Prostate gland (tissue), 2 donors: ENCODE measurements at regions of chr2 and their contacts with region 1.

Region 1: DNA sequence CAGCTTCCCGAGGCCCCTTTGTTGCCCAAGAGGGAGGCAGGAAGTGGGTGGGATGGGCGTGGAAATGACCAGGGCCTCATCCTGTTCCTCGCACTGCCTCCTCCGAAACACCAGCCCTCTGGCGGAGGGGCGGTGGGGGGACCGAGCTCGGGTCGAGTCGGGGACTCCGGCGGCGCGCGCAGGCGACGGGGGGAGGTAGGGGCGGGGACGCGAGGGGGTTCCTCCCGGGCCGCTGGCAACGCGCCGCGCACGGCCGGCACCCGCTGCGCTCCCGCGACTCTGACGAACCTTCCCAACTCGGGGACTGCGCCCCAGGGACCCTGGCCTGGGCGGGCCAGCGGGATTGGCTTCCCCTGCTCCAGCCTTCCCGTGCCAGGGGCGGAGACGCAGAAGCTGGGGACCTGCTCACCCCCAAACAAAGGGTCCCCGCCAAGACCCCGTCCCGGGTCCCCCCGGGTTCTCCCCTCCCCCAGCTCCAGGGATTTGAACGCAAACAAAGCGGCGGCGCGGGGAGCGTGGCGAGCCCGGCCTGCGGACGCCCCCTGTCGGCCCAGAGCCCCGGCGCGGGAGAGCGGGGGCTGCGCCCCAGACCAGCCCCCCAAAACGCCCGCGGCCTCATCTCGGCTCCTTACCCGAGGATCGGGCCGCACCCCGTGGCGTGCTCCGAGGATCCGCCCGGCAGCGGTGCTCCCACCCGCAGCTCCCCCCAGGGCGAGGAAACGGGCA is 1.2 kb downstream of the SEMA4C start:
- DNase-seq: peak; percentile 86
- H3K4me3 ChIP-seq: peak overlapping the region; percentile 99 to 100
- H3K27ac ChIP-seq: peak overlapping the region; percentile 98 to 99
- H3K4me1 ChIP-seq: peaks cover 11% of the 10 kb centered on the region
- H3K27me3 ChIP-seq: no peaks in the 10 kb centered on the region
- CTCF ChIP-seq: peak; percentile 47 to 77 (median 64)
- POLR2A ChIP-seq: no peak

Region 2: GRCh38 chr2:96685577-96686459 is 182.9 kb before region 1 on chr2:
- intact Hi-C with region 1: no loop called
- DNase-seq: no peak
- H3K4me3 ChIP-seq: no peak overlapping the region
- H3K27ac ChIP-seq: no peak overlapping the region
- H3K4me1 ChIP-seq: peaks cover 2% of the 10 kb centered on the region
- H3K27me3 ChIP-seq: no peaks in the 10 kb centered on the region
- CTCF ChIP-seq: no peak
- POLR2A ChIP-seq: no peak

Region 3: DNA sequence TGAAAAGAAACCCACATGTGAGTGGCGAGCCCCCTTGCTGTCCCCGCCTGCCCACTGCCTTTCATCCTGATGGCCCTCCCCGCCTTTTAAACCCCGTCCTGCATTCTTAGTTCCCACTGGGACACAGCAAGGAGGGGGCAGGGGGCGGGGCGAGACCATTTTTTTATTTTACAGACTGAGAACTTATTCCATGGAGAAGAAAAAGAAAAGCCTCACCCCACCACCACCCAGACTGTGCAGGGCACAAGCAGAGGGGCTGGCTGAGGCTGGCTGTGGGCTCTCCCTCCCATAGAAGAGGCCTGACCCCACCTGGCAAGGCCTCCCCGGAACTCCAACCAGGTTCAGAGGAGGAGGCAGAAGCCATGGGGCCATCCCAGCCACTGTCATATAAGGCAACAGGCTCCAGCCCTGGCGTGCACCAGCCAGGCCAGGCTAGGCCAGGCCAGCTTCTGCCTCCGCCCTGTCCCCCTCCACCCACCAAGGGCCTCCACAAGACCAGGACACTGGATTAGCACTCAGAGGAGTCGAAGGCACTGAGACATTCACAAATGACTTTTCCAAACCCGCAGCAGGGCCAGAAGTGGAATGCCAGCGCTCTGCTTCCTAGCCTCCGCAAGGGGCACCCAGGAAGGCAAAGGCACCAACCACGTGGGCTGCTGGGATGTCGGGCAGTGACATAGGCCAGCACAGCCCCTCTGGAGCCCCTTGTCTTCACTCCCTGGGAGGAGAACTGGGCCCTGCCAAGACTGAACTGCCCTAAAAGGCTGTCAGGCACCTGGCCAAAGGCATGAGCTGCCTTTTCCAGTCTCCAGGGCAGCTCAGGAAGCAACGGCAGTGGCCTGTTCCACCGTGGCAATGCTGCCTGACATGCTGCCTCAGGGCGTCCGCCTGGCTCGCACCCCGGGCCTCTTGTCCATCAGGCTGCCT is 38.7 kb after region 1 on chr2:
- intact Hi-C with region 1: loop called (anchors 1 kb)
- DNase-seq: peak; percentile 84
- H3K4me3 ChIP-seq: no peak overlapping the region
- H3K27ac ChIP-seq: peak overlapping the region; percentile 84 to 88
- H3K4me1 ChIP-seq: peaks cover 16% of the 10 kb centered on the region
- H3K27me3 ChIP-seq: no peaks in the 10 kb centered on the region
- CTCF ChIP-seq: peak in 2 of 4 experiments; percentile 20 to 26
- POLR2A ChIP-seq: peak; percentile 20

Region 4: GRCh38 chr2:96927405-96928243 is 58.9 kb after region 1 on chr2:
- intact Hi-C with region 1: no loop called
- DNase-seq: peak; percentile 90
- H3K4me3 ChIP-seq: no peak overlapping the region
- H3K27ac ChIP-seq: peak overlapping the region; percentile 52 to 61
- H3K4me1 ChIP-seq: peaks cover 6% of the 10 kb centered on the region
- H3K27me3 ChIP-seq: no peaks in the 10 kb centered on the region
- CTCF ChIP-seq: peak in 2 of 4 experiments; percentile 48 to 56
- POLR2A ChIP-seq: peak; percentile 35

Region 5: DNA sequence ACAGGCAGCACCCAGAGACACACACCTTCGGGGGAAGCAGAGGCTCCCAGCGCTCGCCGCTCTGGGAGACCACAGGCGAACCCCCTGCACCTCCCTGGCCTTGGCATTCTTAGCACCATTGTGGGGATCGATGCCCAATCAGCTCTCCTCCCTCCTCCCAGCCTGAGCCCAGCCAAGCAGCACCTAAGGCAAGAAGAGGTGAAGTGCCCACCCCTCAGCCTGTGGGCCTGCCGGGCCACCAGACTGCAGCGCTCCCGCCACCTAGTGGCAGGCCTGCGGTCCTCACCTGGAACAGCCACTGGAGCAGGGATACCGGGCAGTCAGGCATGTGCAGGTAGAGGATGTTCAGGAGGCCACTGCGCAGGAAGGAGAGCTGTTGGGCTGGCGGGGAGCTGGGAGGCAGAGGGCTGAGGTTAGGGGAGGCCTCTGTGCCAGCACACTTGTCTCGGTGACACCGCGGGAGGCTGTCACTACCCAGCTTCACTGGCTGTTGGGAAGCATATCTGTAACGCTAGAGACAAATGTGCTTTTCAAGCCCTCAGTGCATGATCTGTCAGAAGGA is 82.5 kb after region 1 on chr2:
- intact Hi-C with region 1: no loop called
- DNase-seq: peak; percentile 85
- H3K4me3 ChIP-seq: no peak overlapping the region
- H3K27ac ChIP-seq: peak overlapping the region; percentile 7 to 15
- H3K4me1 ChIP-seq: peaks cover 7% of the 10 kb centered on the region
- H3K27me3 ChIP-seq: no peaks in the 10 kb centered on the region
- CTCF ChIP-seq: peak; percentile 91 to 97 (median 94)
- POLR2A ChIP-seq: no peak